Left colon (tissue), 2 donors: ENCODE measurements at regions of chr9 and their contacts with region 1.

Region 1: DNA sequence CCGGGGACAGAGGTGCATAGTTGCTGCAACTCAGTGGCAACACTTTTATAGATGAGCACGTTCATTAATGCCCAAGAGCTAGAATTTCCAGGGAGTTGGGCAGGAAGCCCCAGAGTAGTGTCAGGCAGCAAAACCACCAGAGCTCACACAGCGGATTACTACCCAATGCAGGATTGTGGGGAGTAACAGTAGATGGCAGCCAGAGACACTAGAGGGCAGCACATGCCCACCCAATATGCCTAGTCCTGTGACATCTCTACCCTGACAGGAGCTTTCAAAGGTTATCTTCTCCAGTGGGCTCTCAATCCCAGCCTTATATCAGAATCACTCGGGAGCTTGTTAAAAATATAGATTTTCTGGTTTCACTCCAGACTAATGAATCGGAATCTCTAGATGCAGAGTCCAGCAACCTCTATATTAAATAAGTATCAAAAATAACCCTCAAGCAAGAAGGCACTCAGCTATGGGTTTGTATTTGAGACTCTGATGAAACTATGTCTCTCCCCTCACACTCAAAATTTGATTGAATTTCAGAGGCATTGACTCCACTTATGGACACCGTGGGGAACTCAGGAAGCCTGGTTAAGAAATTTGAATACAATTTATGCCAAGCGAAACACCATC is 58.4 kb upstream of the PHF24 start:
- DNase-seq: peak; percentile 65 to 85
- ATAC-seq: peak; percentile 99

Region 2: GRCh38 chr9:34994900-34995669 is 95.4 kb after region 1 on chr9:
- intact Hi-C with region 1: loop called in 1 of 2 experiments (anchors 5 kb)
- DNase-seq: no peak
- ATAC-seq: no peak

Region 3: GRCh38 chr9:35035851-35036701 is 136.4 kb after region 1 on chr9:
- intact Hi-C with region 1: no loop called
- DNase-seq: peak in 1 of 2 donors; percentile 45
- ATAC-seq: peak; percentile 63

Region 4: DNA sequence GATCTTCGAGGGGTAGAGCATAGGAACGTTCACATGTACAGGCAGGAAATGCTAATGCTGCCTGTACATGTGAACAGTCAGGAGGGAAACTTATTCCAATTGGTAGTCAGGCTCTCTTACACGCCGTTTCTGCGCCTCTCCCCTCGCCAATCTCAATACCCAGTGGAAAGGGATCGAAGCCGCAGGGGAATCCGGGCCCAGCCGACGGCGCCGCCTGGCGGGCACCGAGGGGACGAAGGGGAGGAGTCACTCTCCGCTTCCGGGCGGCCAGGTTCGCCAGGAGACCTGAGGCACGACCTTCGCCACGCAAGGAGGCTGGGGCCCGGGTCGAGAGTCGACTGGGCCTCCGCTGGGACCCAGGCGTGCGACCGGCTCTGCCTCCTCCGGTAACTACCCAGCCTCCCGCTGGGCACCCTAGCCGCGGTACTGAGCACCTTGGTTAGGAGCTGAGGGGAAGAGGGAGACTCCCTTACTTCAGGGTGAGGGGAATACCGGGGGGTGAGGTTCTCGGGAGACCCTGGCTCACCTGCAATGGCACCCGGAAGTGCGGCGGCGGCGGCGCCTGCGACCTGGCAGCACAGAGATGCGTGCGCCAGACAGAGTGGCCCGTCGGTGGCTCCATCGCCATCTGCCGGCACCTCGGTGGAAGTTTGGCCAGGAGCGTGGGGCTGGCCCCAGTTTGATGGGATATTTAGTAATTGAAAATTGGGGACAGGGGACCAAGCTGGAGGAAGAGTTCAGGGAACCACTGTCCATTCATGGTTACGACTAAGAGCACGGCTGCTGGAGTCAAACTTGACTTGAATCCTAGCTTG is 196.6 kb after region 1 on chr9 and contains the start of gene PIGO:
- intact Hi-C with region 1: loop called in 1 of 2 experiments (anchors 5 kb)
- DNase-seq: peak; percentile 89 to 95
- ATAC-seq: peak; percentile 93
- total RNA-seq, gene PIGO: 32.4 to 38.7 TPM

Region 5: DNA sequence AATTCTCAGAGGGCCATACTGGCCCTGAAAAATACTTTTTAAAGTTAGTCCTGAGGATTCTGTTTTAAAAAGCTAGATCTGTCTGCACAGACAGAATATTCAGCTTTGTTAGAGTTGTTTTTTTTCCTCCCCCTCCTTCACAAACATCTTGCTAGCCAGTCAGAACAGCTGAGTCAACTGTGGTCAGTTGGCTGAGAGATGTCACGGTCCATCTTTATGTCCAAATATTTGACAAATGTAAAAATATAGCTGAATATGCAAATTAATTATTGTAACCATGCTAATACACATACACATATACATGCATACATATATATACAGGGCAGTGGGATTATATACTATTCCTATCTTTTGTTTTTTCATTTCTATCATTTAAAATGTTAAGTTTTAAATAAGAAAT is 296.0 kb after region 1 on chr9:
- intact Hi-C with region 1: no loop called
- DNase-seq: no peak
- ATAC-seq: no peak